ENCODE measurements at regions of chr11 and their contacts with region 1.

Region 1: DNA sequence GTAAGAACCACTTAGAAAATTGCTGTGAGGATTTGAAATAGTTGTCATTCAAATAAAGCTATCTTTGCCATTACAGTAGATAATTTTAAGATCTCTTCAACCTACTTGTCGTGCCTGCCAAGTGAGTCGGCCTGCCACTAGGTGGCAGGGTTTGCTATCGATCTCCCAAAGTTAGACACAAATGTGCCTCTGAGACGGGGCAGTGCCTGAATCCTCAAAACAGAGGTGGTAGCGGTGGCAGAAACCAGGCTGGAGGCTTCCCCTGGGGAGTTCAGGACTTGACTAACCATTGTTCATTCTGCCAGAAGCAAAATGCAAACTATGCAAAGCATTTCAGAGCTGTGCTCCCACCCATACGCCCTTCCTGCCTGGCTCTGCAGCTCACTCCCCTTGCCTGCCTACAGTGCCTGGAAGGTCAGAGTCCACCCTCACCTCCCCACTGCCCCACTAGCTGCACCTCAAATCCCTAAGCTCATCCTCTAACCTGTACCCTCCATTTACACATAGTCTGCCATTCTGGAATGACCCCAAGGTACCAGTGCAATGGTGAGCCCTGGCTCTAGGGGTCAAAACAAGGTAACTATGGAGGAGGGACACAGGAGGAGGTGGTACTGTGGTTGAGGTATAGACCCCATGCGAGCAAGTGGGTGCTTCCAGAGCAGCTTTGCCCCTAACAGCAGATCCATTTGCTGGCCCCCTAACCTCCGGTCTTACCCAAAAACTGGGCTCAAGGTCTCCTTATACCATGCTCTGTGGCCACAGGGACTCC is 82.1 kb downstream of the C11orf58 start:
- DNase-seq: peak; percentile 34 to 74 (median 57)
- ATAC-seq: peak; percentile 57
- H3K4me3 ChIP-seq: no peak overlapping the region
- H3K4me3 Mint-ChIP-seq: no peak overlapping the region
- H3K27ac ChIP-seq: no peak overlapping the region
- H3K27ac Mint-ChIP-seq: no peak overlapping the region
- H3K4me1 ChIP-seq: no peaks in the 10 kb centered on the region
- H3K4me1 Mint-ChIP-seq: peaks cover 2% of the 10 kb centered on the region
- H3K27me3 ChIP-seq: no peaks in the 10 kb centered on the region
- H3K27me3 Mint-ChIP-seq: peaks cover 3% of the 10 kb centered on the region
- CTCF ChIP-seq: peak; percentile 79

Region 2: DNA sequence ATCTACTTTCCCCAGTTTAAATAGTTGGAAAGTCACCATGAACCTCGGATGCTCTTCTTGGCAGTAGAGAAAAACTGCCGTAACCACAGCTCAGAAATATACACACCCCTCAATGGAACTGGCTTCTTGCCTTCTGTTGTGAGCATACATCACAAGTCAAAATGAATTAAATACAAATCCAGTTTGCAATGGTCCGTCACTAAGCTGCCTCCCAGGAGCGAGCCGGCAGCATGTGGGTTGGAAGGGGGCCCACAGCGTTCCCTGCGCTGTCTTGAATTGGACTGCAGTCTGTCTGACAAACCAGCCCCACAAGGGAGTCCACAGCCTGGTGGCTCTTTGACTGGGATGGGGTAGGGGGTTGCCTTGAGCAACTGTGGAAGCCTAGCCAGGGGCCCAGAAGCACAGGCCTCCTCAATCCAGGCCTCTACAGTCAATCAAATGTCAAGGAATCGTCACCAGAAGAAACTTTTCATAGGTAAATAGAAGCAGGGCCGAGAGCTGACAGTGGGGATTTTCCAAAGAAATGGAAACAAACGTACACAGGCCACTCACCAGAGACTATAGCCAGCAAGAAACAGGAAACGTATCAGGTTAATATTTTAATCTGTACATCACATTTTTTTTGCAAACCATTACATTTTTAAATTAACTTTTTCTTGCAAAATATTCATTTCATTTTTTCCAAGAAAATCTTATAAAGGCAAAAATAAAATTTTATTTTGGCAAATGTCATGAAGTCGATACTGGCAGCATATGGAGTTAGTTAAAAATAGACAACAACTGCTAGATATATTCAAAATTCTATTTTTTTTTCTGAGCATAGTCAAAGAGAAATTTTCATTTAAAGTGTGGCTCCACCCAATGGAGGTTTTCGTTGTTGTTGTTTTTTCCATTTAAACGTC is 43.5 kb before region 1 on chr11:
- CTCF ChIA-PET with region 1: no interaction called
- POLR2A ChIA-PET with region 1: no interaction called
- intact Hi-C with region 1: no loop called
- DNase-seq: no peak
- ATAC-seq: no peak
- H3K4me3 ChIP-seq: no peak overlapping the region
- H3K4me3 Mint-ChIP-seq: no peak overlapping the region
- H3K27ac ChIP-seq: no peak overlapping the region
- H3K27ac Mint-ChIP-seq: no peak overlapping the region
- H3K4me1 ChIP-seq: no peaks in the 10 kb centered on the region
- H3K4me1 Mint-ChIP-seq: no peaks in the 10 kb centered on the region
- H3K27me3 ChIP-seq: no peaks in the 10 kb centered on the region
- H3K27me3 Mint-ChIP-seq: no peaks in the 10 kb centered on the region
- CTCF ChIP-seq: no peak

Region 3: DNA sequence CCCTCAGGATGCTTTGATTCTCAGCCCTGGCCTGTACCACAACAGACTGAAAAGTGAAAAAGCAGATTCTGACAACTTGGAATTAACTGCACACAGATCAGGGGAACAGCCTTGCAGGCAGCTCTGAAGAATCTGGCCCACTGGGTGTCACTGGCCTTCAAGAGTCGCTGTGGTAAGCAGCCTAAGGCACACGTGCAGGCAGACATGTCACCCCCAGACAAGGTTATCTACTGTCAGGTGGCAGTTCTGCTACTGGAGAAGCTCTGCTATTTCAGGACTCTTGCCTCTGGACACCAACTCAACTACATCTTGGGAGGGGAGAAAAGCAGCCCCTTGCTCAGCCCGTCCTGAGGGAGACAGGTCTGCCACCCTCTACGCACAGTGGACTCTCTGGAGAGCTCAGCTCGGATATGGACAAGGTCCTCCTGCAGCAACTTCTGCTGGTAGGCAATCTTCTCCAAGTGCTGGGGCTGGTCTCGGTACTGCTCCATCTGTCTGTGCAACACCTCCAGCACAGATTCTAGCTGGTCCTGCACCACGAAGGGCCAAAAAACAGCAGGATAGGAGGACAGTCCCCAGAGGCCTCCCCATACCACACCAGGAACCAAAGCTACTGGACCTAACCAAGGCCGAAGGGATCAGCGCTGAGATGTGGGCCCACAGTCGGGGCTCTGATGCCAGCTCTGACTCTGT is 19.1 kb before region 1 on chr11:
- CTCF ChIA-PET with region 1: interaction called, 13 read pairs
- POLR2A ChIA-PET with region 1: no interaction called
- intact Hi-C with region 1: no loop called
- DNase-seq: no peak
- ATAC-seq: no peak
- H3K4me3 ChIP-seq: no peak overlapping the region
- H3K4me3 Mint-ChIP-seq: no peak overlapping the region
- H3K27ac ChIP-seq: no peak overlapping the region
- H3K27ac Mint-ChIP-seq: no peak overlapping the region
- H3K4me1 ChIP-seq: no peaks in the 10 kb centered on the region
- H3K4me1 Mint-ChIP-seq: no peaks in the 10 kb centered on the region
- H3K27me3 ChIP-seq: no peaks in the 10 kb centered on the region
- H3K27me3 Mint-ChIP-seq: no peaks in the 10 kb centered on the region
- CTCF ChIP-seq: no peak

Region 4: DNA sequence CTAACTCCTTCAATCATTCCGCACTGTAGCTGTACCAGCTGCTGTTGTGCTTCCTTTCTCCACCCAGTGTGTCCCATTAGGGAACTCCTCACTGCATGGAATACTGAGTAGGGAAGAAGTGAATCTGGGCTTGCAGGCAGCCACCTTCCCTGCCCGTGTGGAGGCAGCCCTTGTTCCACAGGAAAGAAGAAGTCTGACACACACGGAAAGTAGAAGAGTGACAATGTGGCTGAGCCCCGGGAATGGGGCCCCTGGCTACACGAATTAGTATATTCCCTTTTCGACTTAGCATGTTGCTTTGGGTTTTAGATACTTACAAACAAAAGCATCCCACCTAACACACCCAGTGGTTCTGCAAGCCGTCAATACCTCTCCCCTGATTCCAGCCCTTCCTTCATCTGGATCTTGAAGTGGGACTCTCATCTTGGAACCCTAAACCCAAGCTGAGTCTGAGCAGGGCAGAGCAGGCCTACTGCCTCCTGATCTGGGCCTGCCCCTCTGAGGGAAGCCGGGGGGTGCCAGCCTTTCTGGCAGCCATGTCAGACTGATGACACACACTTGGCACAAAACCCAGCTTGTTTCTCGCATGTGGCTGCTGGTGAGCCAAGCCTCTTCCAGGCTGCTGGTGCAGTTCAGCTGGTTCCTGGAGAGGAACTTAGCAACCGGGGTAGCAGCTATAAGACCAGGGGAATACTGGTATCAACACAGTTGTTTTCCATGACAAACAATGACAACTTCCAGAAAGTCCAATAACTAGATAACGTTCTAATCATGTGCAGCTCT is 10.4 kb before region 1 on chr11:
- CTCF ChIA-PET with region 1: interaction called, 28 read pairs
- POLR2A ChIA-PET with region 1: no interaction called
- intact Hi-C with region 1: no loop called
- DNase-seq: no peak
- ATAC-seq: no peak
- H3K4me3 ChIP-seq: no peak overlapping the region
- H3K4me3 Mint-ChIP-seq: no peak overlapping the region
- H3K27ac ChIP-seq: no peak overlapping the region
- H3K27ac Mint-ChIP-seq: no peak overlapping the region
- H3K4me1 ChIP-seq: no peaks in the 10 kb centered on the region
- H3K4me1 Mint-ChIP-seq: peaks cover 2% of the 10 kb centered on the region
- H3K27me3 ChIP-seq: no peaks in the 10 kb centered on the region
- H3K27me3 Mint-ChIP-seq: no peaks in the 10 kb centered on the region
- CTCF ChIP-seq: no peak

Region 5: GRCh38 chr11:16831316-16832192 is 11.0 kb after region 1 on chr11:
- CTCF ChIA-PET with region 1: interaction called, 37 read pairs
- POLR2A ChIA-PET with region 1: no interaction called
- intact Hi-C with region 1: no loop called
- DNase-seq: no peak
- ATAC-seq: no peak
- H3K4me3 ChIP-seq: no peak overlapping the region
- H3K4me3 Mint-ChIP-seq: no peak overlapping the region
- H3K27ac ChIP-seq: no peak overlapping the region
- H3K27ac Mint-ChIP-seq: no peak overlapping the region
- H3K4me1 ChIP-seq: no peaks in the 10 kb centered on the region
- H3K4me1 Mint-ChIP-seq: no peaks in the 10 kb centered on the region
- H3K27me3 ChIP-seq: no peaks in the 10 kb centered on the region
- H3K27me3 Mint-ChIP-seq: peaks cover 2% of the 10 kb centered on the region
- CTCF ChIP-seq: no peak

Region 6: DNA sequence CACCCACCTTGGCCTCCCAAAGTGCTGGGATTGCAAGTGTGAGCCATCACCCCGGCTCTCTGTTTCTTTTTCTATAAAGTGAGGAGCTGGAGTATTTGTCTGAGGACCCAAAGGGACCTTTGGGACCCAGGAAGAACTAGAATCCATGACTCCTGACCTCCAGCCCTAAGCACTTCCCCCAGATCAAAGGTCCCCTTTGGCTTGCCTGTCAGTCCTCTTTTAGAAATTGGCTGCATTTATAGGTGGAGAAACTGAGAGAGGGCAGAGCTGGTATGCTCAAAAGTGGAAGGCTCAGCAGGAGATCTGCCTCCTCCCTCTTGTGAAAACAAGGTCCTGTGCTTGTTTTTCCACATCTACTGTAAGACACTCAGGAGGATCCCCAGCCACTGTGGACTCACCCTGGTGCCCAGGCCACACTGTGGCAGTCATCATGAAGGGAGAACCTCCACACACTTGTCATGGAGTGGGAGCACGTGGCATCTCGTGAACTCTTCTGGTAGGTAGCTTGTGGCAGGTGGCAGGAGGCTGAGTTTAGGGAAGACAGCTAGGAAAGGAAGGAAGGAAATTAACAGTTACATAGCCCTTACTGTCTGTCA is 206.1 kb after region 1 on chr11:
- CTCF ChIA-PET with region 1: no interaction called
- POLR2A ChIA-PET with region 1: no interaction called
- intact Hi-C with region 1: no loop called
- DNase-seq: no peak
- ATAC-seq: no peak
- H3K4me3 ChIP-seq: no peak overlapping the region
- H3K4me3 Mint-ChIP-seq: no peak overlapping the region
- H3K27ac ChIP-seq: no peak overlapping the region
- H3K27ac Mint-ChIP-seq: no peak overlapping the region
- H3K4me1 ChIP-seq: no peaks in the 10 kb centered on the region
- H3K4me1 Mint-ChIP-seq: no peaks in the 10 kb centered on the region
- H3K27me3 ChIP-seq: no peaks in the 10 kb centered on the region
- H3K27me3 Mint-ChIP-seq: no peaks in the 10 kb centered on the region
- CTCF ChIP-seq: no peak

Region 7: GRCh38 chr11:17063171-17064002 is 242.9 kb after region 1 on chr11:
- CTCF ChIA-PET with region 1: interaction called, 3 read pairs
- POLR2A ChIA-PET with region 1: no interaction called
- intact Hi-C with region 1: loop called in 1 of 2 experiments (anchors 10 kb)
- DNase-seq: peak in 4 of 9 experiments; percentile 27 to 53 (median 40)
- ATAC-seq: peak; percentile 48
- H3K4me3 ChIP-seq: no peak overlapping the region
- H3K4me3 Mint-ChIP-seq: no peak overlapping the region
- H3K27ac ChIP-seq: no peak overlapping the region
- H3K27ac Mint-ChIP-seq: no peak overlapping the region
- H3K4me1 ChIP-seq: no peaks in the 10 kb centered on the region
- H3K4me1 Mint-ChIP-seq: no peaks in the 10 kb centered on the region
- H3K27me3 ChIP-seq: no peaks in the 10 kb centered on the region
- H3K27me3 Mint-ChIP-seq: no peaks in the 10 kb centered on the region
- CTCF ChIP-seq: no peak

Region 8: DNA sequence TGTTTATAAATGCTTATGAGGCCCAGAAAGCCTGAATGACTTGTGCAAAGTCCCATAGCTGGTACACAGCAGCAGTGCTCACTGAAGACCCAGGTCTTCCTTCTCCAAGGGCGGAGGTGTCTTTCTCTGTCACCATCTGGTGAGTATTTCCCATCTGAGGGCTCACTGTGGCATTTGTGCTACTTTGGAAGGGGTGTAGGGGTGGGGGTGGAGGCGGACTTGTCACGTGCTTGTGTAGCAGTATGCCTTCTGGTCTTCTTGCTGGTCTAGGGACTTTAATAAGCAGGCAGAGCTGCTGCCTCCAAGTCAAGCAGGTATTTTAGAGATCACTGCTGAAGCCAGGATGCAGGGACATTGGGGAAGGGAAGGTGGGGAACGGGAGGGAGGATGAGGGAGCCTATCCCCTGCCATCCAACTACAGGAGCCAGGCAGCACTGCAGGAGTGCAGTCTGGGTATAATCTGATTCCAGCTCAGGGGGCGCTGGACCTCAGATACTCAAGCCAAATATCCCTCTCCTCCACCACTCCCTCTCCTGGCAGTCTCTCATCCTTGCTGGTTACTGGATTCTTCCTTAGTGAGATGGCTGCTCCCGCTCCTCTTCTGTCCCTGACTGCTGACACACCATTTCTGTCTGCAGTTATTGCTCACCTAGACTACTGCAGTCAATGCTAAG is 652.7 kb after region 1 on chr11:
- CTCF ChIA-PET with region 1: no interaction called
- POLR2A ChIA-PET with region 1: no interaction called
- intact Hi-C with region 1: no loop called
- DNase-seq: no peak
- ATAC-seq: no peak
- H3K4me3 ChIP-seq: no peak overlapping the region
- H3K4me3 Mint-ChIP-seq: no peak overlapping the region
- H3K27ac ChIP-seq: no peak overlapping the region
- H3K27ac Mint-ChIP-seq: no peak overlapping the region
- H3K4me1 ChIP-seq: no peaks in the 10 kb centered on the region
- H3K4me1 Mint-ChIP-seq: peaks cover 5% of the 10 kb centered on the region
- H3K27me3 ChIP-seq: no peaks in the 10 kb centered on the region
- H3K27me3 Mint-ChIP-seq: peaks cover 44% of the 10 kb centered on the region
- CTCF ChIP-seq: no peak

Region 9: DNA sequence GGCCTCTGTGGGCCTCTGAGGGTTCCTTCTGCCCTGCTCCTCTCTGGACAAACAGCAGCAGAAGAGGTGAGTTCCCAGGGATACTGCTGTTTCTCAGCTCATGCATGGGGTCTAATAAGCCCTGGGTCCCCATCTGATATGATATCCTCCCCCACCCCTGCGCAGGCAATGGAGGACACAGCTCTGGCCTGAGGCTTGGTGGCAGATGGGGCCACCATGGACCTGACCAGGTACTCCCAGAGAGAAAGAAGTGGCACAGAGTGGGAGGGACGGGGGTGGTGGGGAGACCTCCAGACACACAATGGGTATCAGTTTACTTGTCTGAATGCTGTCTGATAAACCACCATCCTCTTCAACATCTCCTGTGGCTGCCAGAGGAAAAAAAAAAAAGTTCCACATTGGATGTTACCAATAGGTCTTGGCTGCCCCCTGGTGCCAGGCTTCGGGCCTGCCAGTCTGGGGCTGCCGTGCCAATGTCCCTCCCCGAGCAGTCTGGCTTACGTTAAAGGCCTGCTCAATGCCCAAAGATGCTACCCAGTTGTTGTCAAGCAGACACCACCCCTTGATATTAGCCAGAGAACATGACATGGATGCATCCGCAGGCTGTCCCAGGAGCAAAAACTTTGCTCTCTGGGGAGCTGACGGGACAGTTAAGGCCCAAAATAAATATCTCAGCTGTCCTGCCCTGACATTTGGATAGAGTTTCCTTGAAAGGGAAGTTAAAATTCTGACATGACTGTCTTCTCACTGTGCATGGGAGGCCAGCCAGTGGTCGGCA is 684.0 kb after region 1 on chr11:
- CTCF ChIA-PET with region 1: interaction called, 14 read pairs
- POLR2A ChIA-PET with region 1: no interaction called
- intact Hi-C with region 1: loop called in 1 of 2 experiments (anchors 1 kb)
- DNase-seq: peak; percentile 59 to 85 (median 75)
- ATAC-seq: peak; percentile 85
- H3K4me3 ChIP-seq: no peak overlapping the region
- H3K4me3 Mint-ChIP-seq: no peak overlapping the region
- H3K27ac ChIP-seq: no peak overlapping the region
- H3K27ac Mint-ChIP-seq: no peak overlapping the region
- H3K4me1 ChIP-seq: no peaks in the 10 kb centered on the region
- H3K4me1 Mint-ChIP-seq: no peaks in the 10 kb centered on the region
- H3K27me3 ChIP-seq: no peaks in the 10 kb centered on the region
- H3K27me3 Mint-ChIP-seq: peaks cover 6% of the 10 kb centered on the region
- CTCF ChIP-seq: peak; percentile 72

Measured in CD8-positive, alpha-beta T cell (primary cell).